Thyroid gland (tissue), 4 donors: ENCODE measurements at regions of chr15 and their contacts with region 1.

Region 1: DNA sequence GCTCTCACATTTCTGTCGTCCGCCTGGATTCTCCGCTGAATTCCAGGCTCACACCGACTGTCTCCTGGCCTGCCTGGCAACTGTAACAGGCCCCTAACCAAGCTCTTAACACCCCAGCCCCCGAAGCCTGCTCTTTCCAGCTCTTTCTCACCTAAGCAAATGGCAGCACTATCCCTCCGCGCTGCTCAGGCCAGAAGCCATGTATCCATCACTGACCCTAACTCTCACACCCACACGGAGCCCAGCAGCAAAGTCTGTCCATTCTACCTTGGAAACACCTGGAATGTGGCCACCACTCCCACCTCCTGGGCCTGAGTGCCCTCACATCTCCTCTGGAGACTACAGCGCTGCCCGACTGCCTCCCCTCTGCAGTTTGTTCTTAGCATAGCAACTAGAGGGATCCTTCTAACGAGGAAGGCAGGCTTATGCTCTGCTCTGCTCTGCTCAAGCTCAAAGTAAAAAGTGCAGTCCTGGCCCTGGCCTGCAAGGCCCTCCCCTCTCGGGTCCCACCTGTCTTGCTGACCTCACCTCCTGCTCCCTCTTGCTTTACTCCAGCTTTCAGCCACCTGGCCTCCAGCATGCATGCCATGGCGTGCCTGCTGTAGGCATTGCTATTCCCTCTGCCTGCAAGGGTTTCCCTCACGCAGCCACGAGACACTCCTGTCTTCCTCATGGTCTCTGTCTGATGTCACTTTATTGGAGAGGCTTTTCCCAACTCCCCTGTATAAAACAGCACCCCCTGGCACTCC is 27.2 kb downstream of the FEM1B start:
- DNase-seq: no peak
- H3K4me3 ChIP-seq: no peak overlapping the region
- H3K27ac ChIP-seq: no peak overlapping the region
- H3K4me1 ChIP-seq: peaks cover under 1 to 11% of the 10 kb centered on the region in 2 donors
- H3K27me3 ChIP-seq: no peaks in the 10 kb centered on the region
- CTCF ChIP-seq: no peak
- POLR2A ChIP-seq: no peak

Region 2: GRCh38 chr15:68383161-68384074 is 78.7 kb after region 1 on chr15:
- intact Hi-C with region 1: loop called (anchors 5 kb)
- DNase-seq: peak in 1 of 2 donors; percentile 25
- H3K4me3 ChIP-seq: no peak overlapping the region
- H3K27ac ChIP-seq: no peak overlapping the region
- H3K4me1 ChIP-seq: no peaks in the 10 kb centered on the region
- H3K27me3 ChIP-seq: no peaks in the 10 kb centered on the region
- CTCF ChIP-seq: peak; percentile 36 to 80 (median 74)
- POLR2A ChIP-seq: no peak